GM12878 (cell line): ENCODE measurements at regions of chr10 and their contacts with region 1.

Region 1: DNA sequence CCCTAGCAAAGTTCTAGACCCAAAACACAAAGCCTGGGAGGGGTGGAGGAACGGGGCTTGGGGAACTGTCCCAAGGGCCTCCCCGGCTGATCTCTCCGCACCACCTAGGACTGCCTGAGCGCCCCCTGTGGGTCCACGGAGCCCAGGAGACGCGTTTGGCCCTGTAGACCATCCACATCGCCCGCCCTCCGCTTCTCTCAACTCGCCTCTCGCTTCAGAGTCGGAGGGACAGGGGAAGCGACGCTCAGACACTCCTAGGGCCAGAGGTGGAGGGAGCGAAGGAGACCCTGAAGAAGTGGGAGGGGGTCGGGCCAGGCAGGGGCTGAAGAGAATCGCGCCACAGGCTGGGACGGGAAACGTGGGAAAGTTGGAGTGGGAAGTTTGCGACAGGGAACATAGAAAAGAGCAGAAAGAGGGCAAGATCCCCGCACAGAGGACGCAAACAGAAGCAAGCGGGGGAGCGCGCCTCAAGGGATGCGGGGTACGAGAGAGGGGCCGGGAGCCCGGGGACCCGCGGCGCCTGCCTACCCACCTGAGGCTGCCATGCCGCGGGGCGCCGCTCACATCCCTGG is 378 bp downstream of the PIK3AP1 start:
- DNase-seq: no peak
- ATAC-seq: peak; percentile 82
- H3K4me3 ChIP-seq: peak overlapping the region; percentile 97
- H3K27ac ChIP-seq: peak overlapping the region; percentile 71
- H3K4me1 ChIP-seq: peaks cover 34% of the 10 kb centered on the region
- H3K27me3 ChIP-seq: no peaks in the 10 kb centered on the region
- CTCF ChIP-seq: peak; percentile 89 to 96 (median 89)
- EP300 ChIP-seq: no peak; a peak in 1 of 4 replicates
- POLR2A ChIP-seq: no peak
- RAD21 ChIP-seq: peak; percentile 79

Region 2: DNA sequence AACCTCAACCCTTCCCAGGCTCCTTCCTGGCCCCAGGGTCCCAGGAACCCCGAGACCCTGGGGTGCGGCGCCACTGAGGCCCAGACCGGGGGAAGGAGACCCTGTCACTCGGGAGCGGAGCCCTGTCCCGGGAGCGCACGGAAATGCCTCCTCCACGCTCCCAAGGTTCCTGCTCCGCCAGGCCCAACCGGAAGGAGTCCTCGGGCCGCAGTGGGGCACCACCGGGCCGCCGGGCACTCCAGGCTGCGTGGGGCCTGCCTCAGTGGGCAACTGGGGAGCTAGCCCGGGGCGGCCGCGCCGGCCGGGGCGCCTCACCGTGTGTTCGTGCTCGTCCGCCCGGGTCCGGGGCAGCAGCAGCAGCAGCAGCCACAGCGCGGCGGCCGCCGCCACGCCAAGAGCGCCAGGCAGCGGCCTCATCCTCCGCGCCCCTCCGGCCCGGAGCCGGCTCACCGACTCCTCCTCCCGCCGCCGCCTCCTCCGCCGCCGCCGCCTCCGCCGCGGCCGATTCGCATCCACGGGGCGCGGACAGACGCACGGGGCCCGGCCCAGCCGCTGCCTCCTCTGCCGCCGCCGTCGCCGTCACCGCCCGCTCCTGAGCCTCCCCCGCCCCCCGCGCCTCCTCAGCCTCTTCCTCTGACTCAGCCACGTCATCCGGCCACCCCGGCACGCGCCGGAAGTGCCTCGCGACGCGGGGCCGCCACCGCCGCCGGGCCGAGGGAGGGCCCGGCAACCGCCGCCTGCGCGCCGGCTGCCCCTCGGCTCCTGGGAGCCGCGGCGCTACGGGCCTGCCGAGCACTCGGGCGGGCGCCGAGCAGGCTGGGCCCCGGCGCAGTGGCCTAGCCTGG is 133.3 kb before region 1 on chr10 and contains the start of gene TM9SF3:
- CTCF ChIA-PET with region 1: interaction called, 3 read pairs
- POLR2A ChIA-PET with region 1: no interaction called
- RAD21 ChIA-PET with region 1: interaction called, 3 read pairs
- SMC1A ChIA-PET with region 1: interaction called, 3 read pairs
- in situ Hi-C with region 1: no loop called
- intact Hi-C with region 1: loop called (anchors 10 kb)
- DNase-seq: no peak
- ATAC-seq: peak; percentile 66
- H3K4me3 ChIP-seq: peak within 1 kb of the TSS; percentile 85
- H3K27ac ChIP-seq: peak within 1 kb of the TSS; percentile 96
- H3K4me1 ChIP-seq: peaks cover 22% of the 10 kb centered on the region
- H3K27me3 ChIP-seq: no peaks in the 10 kb centered on the region
- CTCF ChIP-seq: no peak
- EP300 ChIP-seq: no peak
- POLR2A ChIP-seq: peak; percentile 90
- RAD21 ChIP-seq: no peak
- polyA plus RNA-seq, gene TM9SF3: 17.1 to 20.4 TPM

Region 3: DNA sequence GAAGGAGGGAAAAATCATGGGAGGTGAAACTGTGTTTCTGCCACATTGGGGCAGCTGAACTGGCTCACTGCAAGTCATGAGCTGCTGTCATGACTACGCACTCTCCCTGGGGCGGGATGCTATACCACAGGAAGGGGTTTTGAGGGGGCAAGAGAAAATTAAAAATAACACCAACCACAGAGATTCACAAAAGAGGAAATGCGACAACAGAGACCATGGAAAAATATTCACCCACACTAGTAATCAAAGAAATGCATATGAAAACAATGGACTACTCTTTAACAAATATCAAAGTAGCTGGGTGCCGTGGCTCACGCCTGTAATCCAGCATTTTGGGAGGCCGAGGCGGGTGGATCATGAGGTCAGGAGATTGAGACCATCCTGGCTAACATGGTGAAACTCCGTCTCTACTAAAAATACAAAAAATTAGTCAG is 67.9 kb before region 1 on chr10:
- CTCF ChIA-PET with region 1: interaction called, 33 read pairs
- POLR2A ChIA-PET with region 1: interaction called, 25 read pairs
- RAD21 ChIA-PET with region 1: interaction called, 22 read pairs
- SMC1A ChIA-PET with region 1: interaction called, 56 read pairs
- in situ Hi-C with region 1: loop called (anchors 10 kb)
- intact Hi-C with region 1: no loop called
- DNase-seq: peak; percentile 79
- ATAC-seq: peak; percentile 89
- H3K4me3 ChIP-seq: no peak overlapping the region
- H3K27ac ChIP-seq: peak overlapping the region; percentile 79
- H3K4me1 ChIP-seq: peaks cover 50% of the 10 kb centered on the region
- H3K27me3 ChIP-seq: no peaks in the 10 kb centered on the region
- CTCF ChIP-seq: no peak
- EP300 ChIP-seq: peak; percentile 85 to 95
- POLR2A ChIP-seq: no peak
- RAD21 ChIP-seq: 0 out of 2 replicates have a peak, but pooled peaks have one; percentile 2

Region 4: DNA sequence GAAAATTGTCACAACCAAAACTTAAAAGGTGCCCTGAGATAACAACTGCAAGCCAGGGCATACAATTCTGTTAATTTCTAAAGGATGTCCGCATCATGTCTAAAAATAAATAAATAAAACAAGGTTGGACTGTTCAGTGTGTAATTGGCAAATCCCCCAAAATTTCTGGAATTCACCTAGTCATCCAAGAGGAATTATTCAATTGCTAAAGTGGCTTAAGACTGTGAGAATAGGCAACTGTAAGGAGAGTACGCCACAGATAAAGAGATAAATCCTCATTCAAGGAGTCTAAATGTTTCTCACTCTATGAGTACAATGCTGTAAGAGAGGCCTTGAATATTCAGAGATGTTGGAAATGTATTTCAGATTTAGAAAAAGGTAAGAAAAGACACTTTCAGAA is 36.9 kb before region 1 on chr10:
- CTCF ChIA-PET with region 1: interaction called, 6 read pairs
- POLR2A ChIA-PET with region 1: no interaction called
- RAD21 ChIA-PET with region 1: interaction called, 4 read pairs
- SMC1A ChIA-PET with region 1: interaction called, 14 read pairs
- in situ Hi-C with region 1: no loop called
- intact Hi-C with region 1: no loop called
- DNase-seq: no peak
- ATAC-seq: no peak
- H3K4me3 ChIP-seq: no peak overlapping the region
- H3K27ac ChIP-seq: no peak overlapping the region
- H3K4me1 ChIP-seq: peaks cover 38% of the 10 kb centered on the region
- H3K27me3 ChIP-seq: no peaks in the 10 kb centered on the region
- CTCF ChIP-seq: no peak
- EP300 ChIP-seq: no peak
- POLR2A ChIP-seq: no peak
- RAD21 ChIP-seq: no peak

Region 5: GRCh38 chr10:96700374-96701099 is 19.4 kb before region 1 on chr10:
- CTCF ChIA-PET with region 1: interaction called, 133 read pairs
- POLR2A ChIA-PET with region 1: interaction called, 138 read pairs
- RAD21 ChIA-PET with region 1: interaction called, 176 read pairs
- SMC1A ChIA-PET with region 1: interaction called, 233 read pairs
- in situ Hi-C with region 1: no loop called
- intact Hi-C with region 1: loop called (anchors 1 kb)
- DNase-seq: no peak
- ATAC-seq: peak; percentile 78
- H3K4me3 ChIP-seq: peak overlapping the region; percentile 82
- H3K27ac ChIP-seq: peak overlapping the region; percentile 85
- H3K4me1 ChIP-seq: peaks cover 45% of the 10 kb centered on the region
- H3K27me3 ChIP-seq: no peaks in the 10 kb centered on the region
- CTCF ChIP-seq: no peak
- EP300 ChIP-seq: peak; percentile 59 to 79; a peak in 2 of 4 replicates
- POLR2A ChIP-seq: peak; percentile 87
- RAD21 ChIP-seq: no peak

Region 6: GRCh38 chr10:96743988-96744585 is 24.2 kb after region 1 on chr10:
- CTCF ChIA-PET with region 1: interaction called, 36 read pairs
- POLR2A ChIA-PET with region 1: interaction called, 30 read pairs
- RAD21 ChIA-PET with region 1: interaction called, 15 read pairs
- SMC1A ChIA-PET with region 1: interaction called, 13 read pairs
- in situ Hi-C with region 1: no loop called
- intact Hi-C with region 1: loop called (anchors 2 kb)
- DNase-seq: no peak
- ATAC-seq: peak; percentile 61
- H3K4me3 ChIP-seq: no peak overlapping the region
- H3K27ac ChIP-seq: no peak overlapping the region
- H3K4me1 ChIP-seq: peaks cover 25% of the 10 kb centered on the region
- H3K27me3 ChIP-seq: no peaks in the 10 kb centered on the region
- CTCF ChIP-seq: peak; percentile 21 to 60 (median 38); a peak in 4 of 6 replicates
- EP300 ChIP-seq: no peak
- POLR2A ChIP-seq: no peak
- RAD21 ChIP-seq: peak; percentile 57

Region 7: DNA sequence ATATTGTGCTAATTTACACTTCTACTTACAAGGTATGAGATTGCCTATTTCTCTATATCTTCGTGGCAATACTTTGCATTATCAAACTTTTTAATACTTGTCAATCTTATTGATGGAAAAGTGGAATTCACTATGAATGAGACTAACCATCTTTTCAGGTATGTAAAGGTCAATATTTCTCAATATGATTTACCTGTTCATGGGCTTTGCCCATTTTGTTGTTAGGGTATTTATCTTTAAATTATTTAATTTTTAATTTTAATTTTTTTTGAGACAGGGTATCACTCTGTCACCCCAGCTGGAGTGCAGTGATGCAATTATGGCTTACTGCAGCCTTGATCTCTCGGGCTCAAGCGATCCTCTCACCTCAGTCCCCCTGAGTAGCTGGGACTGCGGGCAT is 64.3 kb after region 1 on chr10:
- CTCF ChIA-PET with region 1: no interaction called
- POLR2A ChIA-PET with region 1: no interaction called
- RAD21 ChIA-PET with region 1: no interaction called
- SMC1A ChIA-PET with region 1: no interaction called
- in situ Hi-C with region 1: no loop called
- intact Hi-C with region 1: no loop called
- DNase-seq: no peak
- ATAC-seq: no peak
- H3K4me3 ChIP-seq: no peak overlapping the region
- H3K27ac ChIP-seq: no peak overlapping the region
- H3K4me1 ChIP-seq: peaks cover 1% of the 10 kb centered on the region; the same call in 1 of the 2 replicates
- H3K27me3 ChIP-seq: no peaks in the 10 kb centered on the region
- CTCF ChIP-seq: no peak
- EP300 ChIP-seq: no peak
- POLR2A ChIP-seq: no peak
- RAD21 ChIP-seq: no peak